ENCODE measurements at regions of chr7 and their contacts with region 1.

Region 1: GRCh38 chr7:155344600-155345433 is 47.1 kb downstream of the INSIG1 start:
- DNase-seq: peak; percentile 48 to 90 (median 77)
- ATAC-seq: peak; percentile 97 to 99 (median 98)
- H3K4me3 ChIP-seq: peak overlapping the region in 1 of 2 donors; percentile 42
- H3K4me3 Mint-ChIP-seq: peak overlapping the region; percentile 52 to 64 (median 55)
- H3K27ac ChIP-seq: no peak overlapping the region
- H3K27ac Mint-ChIP-seq: no peak overlapping the region
- H3K4me1 ChIP-seq: peaks cover 0 to 18% of the 10 kb centered on the region in 2 experiments
- H3K4me1 Mint-ChIP-seq: peaks cover 0 to 10% (median 4%) of the 10 kb centered on the region in 3 donors
- H3K27me3 ChIP-seq: peaks cover 0 to 33% of the 10 kb centered on the region in 2 experiments
- H3K27me3 Mint-ChIP-seq: peaks cover 7 to 8% of the 10 kb centered on the region in 2 donors

Region 2: GRCh38 chr7:153682628-153683027 is 1662.2 kb before region 1 on chr7:
- CTCF ChIA-PET with region 1: no interaction called
- POLR2A ChIA-PET with region 1: no interaction called
- DNase-seq: no peak
- ATAC-seq: no peak
- H3K4me3 ChIP-seq: no peak overlapping the region
- H3K4me3 Mint-ChIP-seq: no peak overlapping the region
- H3K27ac ChIP-seq: no peak overlapping the region
- H3K27ac Mint-ChIP-seq: no peak overlapping the region
- H3K4me1 ChIP-seq: no peaks in the 10 kb centered on the region
- H3K4me1 Mint-ChIP-seq: no peaks in the 10 kb centered on the region
- H3K27me3 ChIP-seq: no peaks in the 10 kb centered on the region
- H3K27me3 Mint-ChIP-seq: no peaks in the 10 kb centered on the region

Region 3: GRCh38 chr7:154913638-154914312 is 431.0 kb before region 1 on chr7:
- CTCF ChIA-PET with region 1: interaction called in 1 of 2 experiments, 13 read pairs
- POLR2A ChIA-PET with region 1: no interaction called
- DNase-seq: peak; percentile 62 to 92 (median 82)
- ATAC-seq: peak; percentile 89 to 97 (median 96)
- H3K4me3 ChIP-seq: peak overlapping the region; percentile 34 to 61
- H3K4me3 Mint-ChIP-seq: peak overlapping the region; percentile 80 to 89 (median 81)
- H3K27ac ChIP-seq: no peak overlapping the region
- H3K27ac Mint-ChIP-seq: no peak overlapping the region
- H3K4me1 ChIP-seq: peaks cover 0 to 15% of the 10 kb centered on the region in 2 experiments
- H3K4me1 Mint-ChIP-seq: peaks cover 3 to 6% (median 5%) of the 10 kb centered on the region in 3 donors
- H3K27me3 ChIP-seq: peaks cover 0 to 58% of the 10 kb centered on the region in 2 experiments
- H3K27me3 Mint-ChIP-seq: peaks cover 25 to 27% of the 10 kb centered on the region in 2 donors

Region 4: DNA sequence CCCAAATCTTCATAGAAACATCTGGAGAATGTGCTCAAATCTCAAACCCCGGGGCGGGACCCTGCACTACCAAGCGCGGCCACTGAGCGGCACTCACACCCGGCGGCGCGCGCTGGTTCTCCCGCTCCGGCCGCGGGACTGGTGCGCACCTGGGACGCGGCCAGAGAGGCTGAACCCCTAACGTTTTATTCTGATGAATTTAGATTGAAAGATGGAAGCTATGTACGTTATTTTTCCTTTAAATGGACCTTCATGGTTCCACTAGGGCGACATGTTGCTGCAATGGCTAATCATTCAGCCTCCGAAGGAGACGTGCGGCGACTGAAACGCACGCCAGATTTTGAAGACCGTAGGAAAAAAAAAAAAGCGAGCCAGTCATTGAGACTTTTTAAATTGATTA is 154.1 kb before region 1 on chr7:
- CTCF ChIA-PET with region 1: interaction called, 3 to 14 read pairs
- POLR2A ChIA-PET with region 1: interaction called in 1 of 2 experiments, 3 read pairs
- DNase-seq: peak in 26 of 35 experiments; percentile 12 to 66 (median 42)
- ATAC-seq: peak; percentile 53 to 77 (median 66)
- H3K4me3 ChIP-seq: no peak overlapping the region
- H3K4me3 Mint-ChIP-seq: peak overlapping the region in 1 of 3 donors; percentile 34
- H3K27ac ChIP-seq: no peak overlapping the region
- H3K27ac Mint-ChIP-seq: no peak overlapping the region
- H3K4me1 ChIP-seq: peaks cover 0 to 6% of the 10 kb centered on the region in 2 experiments
- H3K4me1 Mint-ChIP-seq: peaks cover 0 to 5% (median 5%) of the 10 kb centered on the region in 3 donors
- H3K27me3 ChIP-seq: peaks cover 0 to 31% of the 10 kb centered on the region in 2 experiments
- H3K27me3 Mint-ChIP-seq: peaks cover 5 to 19% of the 10 kb centered on the region in 2 donors